OCI-LY7 (cell line): ENCODE measurements at regions of chr7 and their contacts with region 1.

Region 1: GRCh38 chr7:75762314-75762917 is 9.6 kb downstream of the CCL26 start:
- DNase-seq: peak; percentile 84
- H3K4me3 ChIP-seq: no peak overlapping the region
- H3K27ac ChIP-seq: peak overlapping the region; percentile 35
- H3K4me1 ChIP-seq: peaks cover 9% of the 10 kb centered on the region
- CTCF ChIP-seq: peak; percentile 92

Region 2: DNA sequence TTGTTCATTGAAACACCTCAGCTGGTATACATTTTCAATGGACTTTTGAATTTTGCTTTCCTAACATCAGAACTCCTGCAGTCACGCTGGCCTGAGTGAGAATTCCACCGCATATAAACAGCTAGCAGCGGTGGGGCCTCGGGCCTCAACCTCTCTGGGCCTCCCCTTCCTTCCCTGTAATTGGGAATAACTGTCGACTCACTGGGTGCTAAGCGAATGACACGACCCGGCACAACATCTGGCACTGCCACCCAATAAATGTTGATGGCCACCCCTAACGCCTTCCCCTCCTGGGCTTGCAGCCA is 689.5 kb before region 1 on chr7:
- CTCF ChIA-PET with region 1: no interaction called
- POLR2A ChIA-PET with region 1: no interaction called
- intact Hi-C with region 1: loop called (anchors 10 kb)
- DNase-seq: no peak
- H3K4me3 ChIP-seq: peak overlapping the region; percentile 73
- H3K27ac ChIP-seq: peak overlapping the region; percentile 36
- H3K4me1 ChIP-seq: peaks cover 10% of the 10 kb centered on the region
- CTCF ChIP-seq: no peak

Region 3: DNA sequence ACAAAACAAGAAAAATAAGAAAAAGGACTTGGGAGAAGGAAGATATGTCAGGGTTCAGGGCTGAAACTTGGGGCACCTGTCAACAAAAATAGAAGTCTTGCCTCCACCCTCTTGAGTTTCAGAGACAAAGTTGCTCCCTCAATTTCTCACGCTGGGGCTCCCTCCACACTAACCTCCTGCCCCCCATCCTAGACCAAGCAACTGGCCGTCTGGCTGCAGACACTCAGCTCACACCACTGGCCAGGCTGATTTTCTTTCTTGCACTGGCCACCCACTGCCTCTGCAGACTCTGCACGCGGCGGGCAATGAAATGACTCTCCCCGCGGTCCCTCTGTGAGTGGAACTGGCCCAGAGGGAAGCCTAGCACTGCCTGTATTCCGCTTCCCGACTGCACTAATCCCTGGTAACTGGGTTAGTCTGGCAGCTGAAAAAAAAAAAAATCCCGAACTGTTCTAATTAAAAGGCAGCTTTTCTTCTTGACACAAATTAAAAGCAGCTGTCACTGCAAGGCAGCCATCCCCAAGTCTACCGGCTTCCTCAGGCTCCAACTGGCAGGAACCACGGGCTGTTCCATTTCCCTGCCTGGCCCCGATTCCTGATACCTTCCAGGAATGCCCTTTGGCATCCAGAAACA is 186.8 kb before region 1 on chr7:
- CTCF ChIA-PET with region 1: no interaction called
- POLR2A ChIA-PET with region 1: no interaction called
- intact Hi-C with region 1: loop called (anchors 10 kb)
- DNase-seq: no peak
- H3K4me3 ChIP-seq: no peak overlapping the region
- H3K27ac ChIP-seq: no peak overlapping the region
- H3K4me1 ChIP-seq: no peaks in the 10 kb centered on the region
- CTCF ChIP-seq: no peak

Region 4: GRCh38 chr7:75611548-75612178 is 150.8 kb before region 1 on chr7:
- CTCF ChIA-PET with region 1: interaction called, 3 read pairs
- POLR2A ChIA-PET with region 1: interaction called, 3 read pairs
- intact Hi-C with region 1: loop called (anchors 5 kb)
- DNase-seq: no peak
- H3K4me3 ChIP-seq: no peak overlapping the region
- H3K27ac ChIP-seq: no peak overlapping the region
- H3K4me1 ChIP-seq: peaks cover 13% of the 10 kb centered on the region
- CTCF ChIP-seq: no peak